ENCODE measurements at regions of chr11 and their contacts with region 1.

Region 1: DNA sequence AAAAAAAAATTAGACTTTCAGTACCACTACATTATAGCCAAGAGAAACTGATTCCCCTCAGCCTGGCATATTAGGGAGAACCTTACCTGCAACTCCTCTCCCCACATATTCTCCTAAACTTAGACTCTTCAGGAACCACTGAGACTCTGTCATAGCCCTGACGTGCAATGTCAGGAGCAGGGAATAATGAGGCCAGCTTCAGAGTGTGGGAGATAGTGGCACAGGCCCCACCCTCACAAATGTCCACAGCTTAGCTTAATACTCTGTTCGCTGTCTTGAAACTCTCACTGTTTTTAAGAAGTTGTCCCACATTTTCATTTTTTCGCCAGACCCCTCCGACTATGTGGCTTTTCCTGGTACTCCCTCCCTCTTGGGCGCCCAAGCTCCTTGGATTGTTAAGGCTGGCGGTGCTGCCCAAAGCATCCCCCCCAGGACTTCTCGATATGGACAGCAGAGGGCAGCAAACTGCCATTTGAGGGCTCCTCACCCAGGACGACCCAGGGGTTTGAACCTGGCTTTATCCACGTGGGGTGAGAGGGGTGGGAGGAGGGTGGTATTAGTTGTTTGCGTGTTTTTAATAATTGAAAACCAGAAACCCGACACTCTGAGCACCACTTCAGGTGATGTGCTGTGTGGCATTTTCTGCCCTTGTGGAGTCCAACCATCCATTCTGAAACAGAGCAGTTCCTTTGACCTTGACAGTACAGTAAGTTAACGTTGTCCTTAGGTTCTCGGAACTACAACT is 45.2 kb upstream of the RASSF10 start:
- DNase-seq: peak; percentile 78
- ATAC-seq: peak; percentile 89
- H3K4me3 Mint-ChIP-seq: no peak overlapping the region
- H3K27ac Mint-ChIP-seq: no peak overlapping the region
- H3K4me1 Mint-ChIP-seq: no peaks in the 10 kb centered on the region
- H3K27me3 Mint-ChIP-seq: peaks cover 22% of the 10 kb centered on the region

Region 2: GRCh38 chr11:13152736-13153533 is 189.0 kb after region 1 on chr11:
- CTCF ChIA-PET with region 1: no interaction called
- POLR2A ChIA-PET with region 1: no interaction called
- intact Hi-C with region 1: loop called in 1 of 2 experiments (anchors 5 kb)
- DNase-seq: no peak
- ATAC-seq: no peak
- H3K4me3 Mint-ChIP-seq: no peak overlapping the region
- H3K27ac Mint-ChIP-seq: no peak overlapping the region
- H3K4me1 Mint-ChIP-seq: no peaks in the 10 kb centered on the region
- H3K27me3 Mint-ChIP-seq: peaks cover 14% of the 10 kb centered on the region

Region 3: GRCh38 chr11:13183094-13183825 is 219.3 kb after region 1 on chr11:
- CTCF ChIA-PET with region 1: interaction called, 10 read pairs
- POLR2A ChIA-PET with region 1: no interaction called
- intact Hi-C with region 1: loop called (anchors 1 kb)
- DNase-seq: peak; percentile 11
- ATAC-seq: peak; percentile 71
- H3K4me3 Mint-ChIP-seq: no peak overlapping the region
- H3K27ac Mint-ChIP-seq: no peak overlapping the region
- H3K4me1 Mint-ChIP-seq: peaks cover 10% of the 10 kb centered on the region
- H3K27me3 Mint-ChIP-seq: peaks cover 19% of the 10 kb centered on the region

Region 4: GRCh38 chr11:13238879-13239514 is 275.0 kb after region 1 on chr11:
- CTCF ChIA-PET with region 1: interaction called, 4 read pairs
- POLR2A ChIA-PET with region 1: no interaction called
- intact Hi-C with region 1: loop called (anchors 1 to 5 kb)
- DNase-seq: peak; percentile 70
- ATAC-seq: peak; percentile 70
- H3K4me3 Mint-ChIP-seq: no peak overlapping the region
- H3K27ac Mint-ChIP-seq: no peak overlapping the region
- H3K4me1 Mint-ChIP-seq: no peaks in the 10 kb centered on the region
- H3K27me3 Mint-ChIP-seq: peaks cover 8% of the 10 kb centered on the region

Region 5: DNA sequence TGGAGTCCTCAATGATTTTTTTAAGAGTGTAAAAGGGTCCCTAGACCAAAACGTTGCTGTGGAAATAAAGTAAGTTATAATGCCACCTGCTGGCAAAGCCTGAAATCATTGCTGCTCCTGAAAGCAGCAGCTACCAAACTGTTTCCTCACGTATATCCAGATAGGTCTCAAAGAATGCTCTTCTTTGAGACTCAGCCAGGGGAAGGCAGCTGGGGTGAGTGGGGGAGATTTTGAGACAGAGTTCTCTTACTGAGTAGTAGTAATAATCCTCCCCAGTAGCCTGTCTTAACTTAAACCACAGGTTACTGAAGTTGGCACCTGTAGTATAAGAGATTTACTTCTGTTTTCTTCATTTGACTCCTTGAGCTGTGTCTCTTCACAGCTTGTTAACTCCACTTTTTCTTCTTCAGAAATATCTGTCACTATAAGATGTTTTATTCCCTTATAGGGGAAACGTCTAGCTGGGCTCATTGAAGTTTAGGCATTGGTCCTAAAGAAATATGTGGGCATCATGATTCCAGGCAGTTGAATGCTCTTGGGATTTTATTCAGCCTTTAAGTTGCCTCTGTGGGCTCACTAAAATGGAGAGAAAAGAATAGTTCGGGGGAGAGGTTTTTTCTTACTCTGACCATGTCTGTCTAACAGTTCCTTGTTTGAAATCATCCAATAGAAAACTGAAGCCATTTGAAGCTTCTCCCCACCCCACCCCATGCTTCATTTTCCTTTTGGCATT is 421.1 kb after region 1 on chr11:
- CTCF ChIA-PET with region 1: interaction called, 6 read pairs
- POLR2A ChIA-PET with region 1: no interaction called
- intact Hi-C with region 1: loop called in 1 of 2 experiments (anchors 1 kb)
- DNase-seq: peak; percentile 49
- ATAC-seq: peak; percentile 42
- H3K4me3 Mint-ChIP-seq: no peak overlapping the region
- H3K27ac Mint-ChIP-seq: no peak overlapping the region
- H3K4me1 Mint-ChIP-seq: peaks cover 2% of the 10 kb centered on the region
- H3K27me3 Mint-ChIP-seq: no peaks in the 10 kb centered on the region